Activated CD4-positive, alpha-beta T cell treated with anti-CD3 and anti-CD28 coated beads, Interleukin-2, amount 10 ng/mL, durations not matched to agents 24 days and 14 days (primary cell): ENCODE measurements at regions of chr1 and their contacts with region 1.

Region 1: GRCh38 chr1:108691942-108692723 is at the start of gene PRPF38B:
- DNase-seq: peak; percentile 98
- H3K4me3 Mint-ChIP-seq: peak within 1 kb of the TSS; percentile 99
- H3K27ac Mint-ChIP-seq: peak within 1 kb of the TSS; percentile 100
- H3K4me1 Mint-ChIP-seq: peaks cover 26% of the 10 kb centered on the region
- H3K27me3 Mint-ChIP-seq: peaks cover 14% of the 10 kb centered on the region
- total RNA-seq, gene PRPF38B: 89.2 and 90.3 TPM in 2 replicates

Region 2: DNA sequence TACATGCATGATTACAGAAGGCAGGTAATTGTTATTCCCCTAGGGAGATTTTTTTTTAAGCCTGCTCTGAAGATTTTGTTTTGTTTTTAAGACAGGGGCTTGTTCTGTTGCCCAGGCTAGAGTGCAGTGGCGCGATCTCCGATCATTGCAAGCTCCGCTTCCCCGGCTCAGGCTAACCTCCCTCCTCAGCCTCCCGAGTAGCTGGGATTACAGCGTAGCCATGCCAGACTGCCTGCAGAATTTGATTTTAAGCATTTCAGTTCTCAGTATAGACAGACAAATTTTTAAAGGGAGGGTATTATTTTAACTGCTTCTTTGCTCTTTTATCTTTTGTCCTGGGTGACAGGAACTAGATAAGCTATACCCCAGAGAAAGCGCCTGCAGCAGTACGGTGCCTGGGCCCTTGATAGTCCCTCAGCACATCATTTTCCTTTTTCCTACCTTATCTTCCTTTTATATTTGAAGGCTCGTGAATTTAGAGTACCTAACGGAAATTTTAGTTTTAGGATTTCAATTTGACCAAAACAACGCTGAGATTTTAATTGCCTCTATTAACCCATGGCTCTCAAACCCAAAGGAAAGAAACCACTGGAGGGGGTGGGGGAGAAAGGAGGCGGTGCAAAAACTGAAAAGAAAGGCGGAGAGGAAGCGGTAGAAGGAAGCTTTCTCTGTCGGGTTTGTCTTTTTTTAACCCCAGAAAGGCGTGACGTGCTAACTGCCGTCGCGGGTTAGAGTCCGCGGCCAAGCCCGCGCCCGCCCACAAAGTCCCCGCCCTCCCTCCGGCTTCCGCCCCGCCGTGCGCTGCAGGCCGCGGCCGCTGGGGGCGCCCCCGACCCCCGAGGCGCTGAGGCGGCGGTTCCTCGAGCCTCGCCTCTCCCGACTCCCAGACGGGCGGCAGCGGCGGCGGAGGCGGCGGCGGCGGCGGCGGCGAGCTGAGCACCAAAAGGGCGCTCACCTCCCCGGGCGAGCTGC is 132.6 kb before region 1 on chr1 and contains the start of gene EEIG2:
- intact Hi-C with region 1: loop called (anchors 2 kb)
- DNase-seq: peak; percentile 97
- H3K4me3 Mint-ChIP-seq: peak within 1 kb of the TSS; percentile 93
- H3K27ac Mint-ChIP-seq: peak within 1 kb of the TSS; percentile 90
- H3K4me1 Mint-ChIP-seq: peaks cover 30% of the 10 kb centered on the region
- H3K27me3 Mint-ChIP-seq: peaks cover 8% of the 10 kb centered on the region
- total RNA-seq, gene EEIG2: 13.4 and 14.0 TPM in 2 replicates

Region 3: DNA sequence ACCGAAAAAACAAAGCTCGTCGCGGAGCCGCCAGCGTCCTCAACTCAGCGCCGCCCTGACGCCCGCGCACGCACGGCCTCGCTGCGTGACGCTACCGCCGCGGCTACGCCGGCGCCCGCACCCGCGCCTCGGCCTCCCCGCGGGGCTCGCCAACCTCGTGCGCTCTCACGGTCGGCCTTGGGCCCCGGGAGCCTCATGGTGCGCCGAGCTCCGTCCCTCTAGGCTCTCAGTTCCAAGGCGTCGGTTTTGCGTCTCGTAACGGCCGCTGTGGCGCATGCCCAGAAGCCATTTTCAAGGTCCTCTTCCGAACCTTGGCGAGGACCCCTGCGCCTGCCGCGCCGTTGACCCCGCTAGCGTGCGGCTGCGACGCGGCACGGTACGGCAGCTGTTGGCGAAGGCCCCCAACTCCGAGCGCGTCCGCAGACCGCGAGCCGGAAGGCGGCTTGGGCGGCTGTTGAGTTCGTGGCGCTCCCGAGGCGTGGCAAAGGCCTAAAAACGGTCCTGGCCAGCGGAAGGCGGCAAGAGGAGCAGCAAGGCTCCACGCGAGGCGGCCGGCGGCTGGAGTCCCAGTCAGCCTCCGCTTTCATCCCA is 31.0 kb before region 1 on chr1 and contains the start of gene HENMT1:
- intact Hi-C with region 1: loop called (anchors 2 kb)
- DNase-seq: peak; percentile 93
- H3K4me3 Mint-ChIP-seq: peak within 1 kb of the TSS; percentile 87
- H3K27ac Mint-ChIP-seq: peak within 1 kb of the TSS; percentile 97
- H3K4me1 Mint-ChIP-seq: peaks cover 34% of the 10 kb centered on the region
- H3K27me3 Mint-ChIP-seq: no peaks in the 10 kb centered on the region
- total RNA-seq, gene HENMT1: 17.5 and 17.7 TPM in 2 replicates

Region 4: DNA sequence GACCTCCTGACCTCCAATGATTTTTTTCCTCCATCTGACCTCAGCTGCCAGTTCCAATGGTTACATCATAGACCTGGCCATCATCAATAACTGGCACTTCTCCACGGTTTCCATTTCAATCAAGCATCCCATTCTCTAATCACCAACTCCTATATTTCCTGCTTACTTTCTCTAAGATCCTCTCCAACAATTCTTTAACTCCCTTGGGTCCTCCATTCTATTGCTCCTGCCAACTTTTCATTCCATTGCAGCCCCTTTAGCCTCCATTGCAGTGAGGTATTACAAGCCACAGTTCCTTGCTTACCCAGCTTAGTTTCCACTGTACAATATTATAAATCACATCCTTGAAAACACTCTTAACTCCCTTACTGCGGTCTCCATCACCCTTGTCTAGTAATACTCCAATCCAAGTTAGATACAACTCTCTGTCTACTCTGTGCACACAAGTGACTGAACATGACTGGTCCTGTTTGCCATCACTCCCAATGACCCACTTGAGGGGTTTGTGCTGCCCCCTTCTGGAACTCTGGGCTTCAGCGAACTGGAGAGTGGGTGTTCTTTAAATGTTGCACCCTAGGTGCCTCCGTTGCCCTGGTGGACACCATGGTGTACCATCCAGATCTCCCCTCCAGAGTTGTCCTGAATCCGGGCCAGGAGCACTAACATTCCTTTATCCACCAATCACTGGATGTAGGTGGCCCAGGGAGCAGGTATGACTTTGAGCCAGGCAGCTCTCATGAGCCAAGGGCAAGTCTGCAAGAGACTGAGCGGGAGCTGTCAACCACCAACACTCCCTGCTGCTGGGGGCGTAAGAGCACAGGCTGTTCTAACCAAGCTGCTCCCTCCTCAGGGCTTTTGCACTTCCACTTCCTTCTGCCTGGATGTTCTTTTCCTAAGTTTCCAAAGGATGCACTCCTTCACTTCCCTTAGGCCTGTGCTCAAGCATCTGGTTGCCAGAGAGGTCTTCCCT is 16.8 kb after region 1 on chr1:
- intact Hi-C with region 1: loop called (anchors 1 kb)
- DNase-seq: peak; percentile 87
- H3K4me3 Mint-ChIP-seq: no peak overlapping the region
- H3K27ac Mint-ChIP-seq: no peak overlapping the region
- H3K4me1 Mint-ChIP-seq: peaks cover 19% of the 10 kb centered on the region
- H3K27me3 Mint-ChIP-seq: peaks cover 16% of the 10 kb centered on the region

Region 5: DNA sequence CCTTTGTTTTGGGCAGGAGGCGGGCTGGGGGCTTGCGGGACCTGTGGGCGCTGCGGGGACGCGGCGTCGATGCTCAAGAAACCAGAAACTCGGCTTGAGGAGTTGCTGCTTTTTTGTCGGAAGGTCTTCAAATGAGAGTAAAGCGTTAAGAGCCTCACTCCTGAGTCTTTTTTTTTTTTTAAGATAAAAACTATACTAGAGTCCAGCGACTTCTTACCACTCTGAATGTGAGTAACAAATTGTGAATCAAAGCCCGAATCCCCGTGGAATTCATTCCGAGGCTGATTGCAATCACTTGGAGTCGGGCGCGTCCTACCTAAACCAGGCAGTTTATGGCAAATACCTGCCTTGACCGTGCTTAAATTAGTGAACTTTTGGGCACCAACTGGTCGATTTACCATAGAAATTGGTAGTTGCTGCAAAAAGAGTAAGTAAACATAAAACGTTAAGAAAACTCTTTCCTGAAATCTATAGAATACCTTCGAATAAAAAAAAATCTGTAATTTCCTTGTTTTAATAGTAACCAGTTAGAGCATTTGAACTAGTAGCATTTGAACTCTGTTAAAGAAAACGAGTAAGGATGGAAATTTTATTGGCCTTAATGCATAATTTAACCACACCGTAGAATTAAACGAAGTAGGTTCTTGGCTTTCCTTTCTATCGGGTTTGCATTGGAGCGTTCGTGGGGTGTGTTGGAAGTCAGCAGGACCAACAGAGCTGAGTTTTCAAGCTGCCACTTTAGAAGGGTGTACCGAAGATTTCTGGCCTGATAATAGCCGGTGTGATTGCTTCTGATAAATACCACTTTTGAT is 185.4 kb after region 1 on chr1:
- intact Hi-C with region 1: loop called (anchors 2 kb)
- DNase-seq: peak; percentile 65
- H3K4me3 Mint-ChIP-seq: peak overlapping the region; percentile 93
- H3K27ac Mint-ChIP-seq: peak overlapping the region; percentile 54
- H3K4me1 Mint-ChIP-seq: peaks cover 23% of the 10 kb centered on the region
- H3K27me3 Mint-ChIP-seq: peaks cover 17% of the 10 kb centered on the region

Region 6: GRCh38 chr1:108963052-108963686 is 271.0 kb after region 1 on chr1 and contains the start of gene CLCC1:
- intact Hi-C with region 1: loop called (anchors 10 kb)
- DNase-seq: peak; percentile 98
- H3K4me3 Mint-ChIP-seq: peak within 1 kb of the TSS; percentile 91
- H3K27ac Mint-ChIP-seq: peak within 1 kb of the TSS; percentile 97
- H3K4me1 Mint-ChIP-seq: peaks cover 21% of the 10 kb centered on the region
- H3K27me3 Mint-ChIP-seq: peaks cover 7% of the 10 kb centered on the region
- total RNA-seq, gene CLCC1: 21.5 and 26.2 TPM in 2 replicates